ENCODE measurements at regions of chr1 and their contacts with region 1.

Region 1: DNA sequence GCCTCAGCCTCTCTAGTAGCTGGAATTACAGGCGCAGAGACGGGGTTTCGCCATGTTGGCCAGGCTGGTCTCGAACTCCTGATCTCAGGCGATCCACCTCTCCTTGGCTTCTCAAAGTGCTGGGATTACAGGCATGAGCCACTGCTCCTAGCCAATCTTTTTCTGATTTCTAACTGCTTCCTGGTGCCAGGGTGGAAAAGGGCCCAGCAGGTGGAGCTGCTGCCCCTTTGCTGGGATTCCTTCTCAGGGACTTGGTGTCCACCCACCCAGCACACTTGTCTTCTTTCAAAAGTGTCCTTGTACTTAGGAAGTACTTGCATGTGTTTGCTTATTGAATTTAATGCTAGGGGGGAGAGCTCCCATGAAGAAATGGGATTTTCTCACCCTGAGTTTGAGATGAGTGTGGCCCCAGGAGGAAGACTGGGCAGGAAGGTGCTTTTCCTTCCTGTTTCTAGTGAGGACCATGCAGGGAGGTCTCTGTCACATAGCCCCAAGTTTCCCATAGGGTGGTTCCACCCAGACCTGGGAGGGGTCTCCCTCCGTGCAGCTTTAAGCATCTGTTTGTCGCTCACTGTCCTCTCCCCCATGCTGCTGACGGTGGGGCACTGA is 14.2 kb downstream of the UTP11 start:
- DNase-seq: peak; percentile 63
- H3K4me3 ChIP-seq: no peak overlapping the region
- H3K27ac ChIP-seq: no peak overlapping the region
- H3K4me1 ChIP-seq: peaks cover 40% of the 10 kb centered on the region
- H3K27me3 ChIP-seq: no peaks in the 10 kb centered on the region
- CTCF ChIP-seq: peak; percentile 62 to 78
- POLR2A ChIP-seq: no peak

Region 2: DNA sequence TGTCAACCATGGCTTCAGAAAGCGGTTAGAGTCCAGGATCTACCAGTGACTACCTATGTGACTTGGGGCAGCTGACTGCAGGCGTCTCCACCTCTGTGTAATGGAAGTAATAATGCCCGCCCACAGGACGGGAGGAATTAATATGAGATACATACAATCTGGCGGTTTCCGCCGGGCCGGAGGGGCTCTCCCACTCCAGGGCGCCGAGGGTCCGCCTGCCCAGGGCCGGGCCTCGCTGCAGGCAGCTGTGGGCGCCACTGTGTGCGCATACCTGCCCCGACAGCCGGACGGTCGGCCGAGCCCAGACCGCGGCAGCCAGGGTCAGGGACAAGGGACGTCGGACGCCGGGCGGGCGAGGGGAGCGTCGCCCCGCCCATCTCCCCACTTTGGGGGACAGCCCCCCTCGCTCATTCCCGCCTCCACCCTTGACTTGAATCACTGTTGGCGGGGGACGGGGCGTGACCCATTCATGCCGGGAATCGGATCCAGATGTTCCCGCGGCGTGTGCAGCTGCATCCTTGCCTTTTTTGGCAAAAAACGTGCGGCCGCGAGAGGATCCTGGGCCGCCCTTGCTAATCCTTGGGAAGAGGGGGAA is 30.8 kb before region 1 on chr1:
- CTCF ChIA-PET with region 1: interaction called, 4 read pairs
- POLR2A ChIA-PET with region 1: no interaction called
- dilution Hi-C with region 1: no loop called
- intact Hi-C with region 1: loop called (anchors 1 kb)
- DNase-seq: no peak
- H3K4me3 ChIP-seq: peak overlapping the region in 1 of 3 experiments; percentile 20
- H3K27ac ChIP-seq: peak overlapping the region; percentile 46
- H3K4me1 ChIP-seq: peaks cover 44% of the 10 kb centered on the region
- H3K27me3 ChIP-seq: no peaks in the 10 kb centered on the region
- CTCF ChIP-seq: no peak
- POLR2A ChIP-seq: no peak

Region 3: GRCh38 chr1:38046884-38047602 is 20.3 kb after region 1 on chr1:
- CTCF ChIA-PET with region 1: interaction called, 12 read pairs
- POLR2A ChIA-PET with region 1: no interaction called
- dilution Hi-C with region 1: no loop called
- intact Hi-C with region 1: loop called (anchors 1 kb)
- DNase-seq: peak; percentile 71
- H3K4me3 ChIP-seq: peak overlapping the region; percentile 26 to 37 (median 28)
- H3K27ac ChIP-seq: no peak overlapping the region
- H3K4me1 ChIP-seq: peaks cover 7% of the 10 kb centered on the region
- H3K27me3 ChIP-seq: peaks cover 43 to 58% of the 10 kb centered on the region in 2 experiments
- CTCF ChIP-seq: no peak
- POLR2A ChIP-seq: no peak

Region 4: DNA sequence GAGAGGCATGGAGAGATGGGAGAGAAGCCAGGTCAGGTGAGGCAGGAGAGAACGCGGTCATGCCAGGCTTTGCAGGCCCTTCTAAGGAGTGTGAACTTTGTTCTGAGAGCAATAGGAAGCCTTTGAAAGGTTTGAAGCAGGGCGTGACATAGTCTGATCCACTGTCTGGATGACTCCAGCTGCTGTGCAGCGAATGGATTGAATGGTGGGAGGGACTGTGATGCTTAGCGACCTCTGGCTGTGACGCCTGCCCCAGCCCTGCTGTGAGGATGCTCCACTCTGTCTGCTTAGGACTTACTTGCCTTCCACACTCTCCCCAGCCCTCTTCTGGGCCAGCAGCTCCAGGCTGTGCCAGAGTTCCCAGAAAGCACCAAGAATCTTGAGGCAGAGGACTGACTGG is 61.7 kb after region 1 on chr1:
- CTCF ChIA-PET with region 1: no interaction called
- POLR2A ChIA-PET with region 1: no interaction called
- dilution Hi-C with region 1: no loop called
- intact Hi-C with region 1: no loop called
- DNase-seq: no peak
- H3K4me3 ChIP-seq: no peak overlapping the region
- H3K27ac ChIP-seq: no peak overlapping the region
- H3K4me1 ChIP-seq: no peaks in the 10 kb centered on the region
- H3K27me3 ChIP-seq: peaks cover 0 to 2% of the 10 kb centered on the region in 2 experiments
- CTCF ChIP-seq: no peak
- POLR2A ChIP-seq: no peak

Region 5: GRCh38 chr1:38500352-38500751 is 473.7 kb after region 1 on chr1:
- CTCF ChIA-PET with region 1: no interaction called
- POLR2A ChIA-PET with region 1: no interaction called
- dilution Hi-C with region 1: no loop called
- intact Hi-C with region 1: loop called (anchors 10 kb)
- DNase-seq: no peak
- H3K4me3 ChIP-seq: no peak overlapping the region
- H3K27ac ChIP-seq: no peak overlapping the region
- H3K4me1 ChIP-seq: no peaks in the 10 kb centered on the region
- H3K27me3 ChIP-seq: no peaks in the 10 kb centered on the region
- CTCF ChIP-seq: peak; percentile 12 to 20
- POLR2A ChIP-seq: no peak

Region 6: DNA sequence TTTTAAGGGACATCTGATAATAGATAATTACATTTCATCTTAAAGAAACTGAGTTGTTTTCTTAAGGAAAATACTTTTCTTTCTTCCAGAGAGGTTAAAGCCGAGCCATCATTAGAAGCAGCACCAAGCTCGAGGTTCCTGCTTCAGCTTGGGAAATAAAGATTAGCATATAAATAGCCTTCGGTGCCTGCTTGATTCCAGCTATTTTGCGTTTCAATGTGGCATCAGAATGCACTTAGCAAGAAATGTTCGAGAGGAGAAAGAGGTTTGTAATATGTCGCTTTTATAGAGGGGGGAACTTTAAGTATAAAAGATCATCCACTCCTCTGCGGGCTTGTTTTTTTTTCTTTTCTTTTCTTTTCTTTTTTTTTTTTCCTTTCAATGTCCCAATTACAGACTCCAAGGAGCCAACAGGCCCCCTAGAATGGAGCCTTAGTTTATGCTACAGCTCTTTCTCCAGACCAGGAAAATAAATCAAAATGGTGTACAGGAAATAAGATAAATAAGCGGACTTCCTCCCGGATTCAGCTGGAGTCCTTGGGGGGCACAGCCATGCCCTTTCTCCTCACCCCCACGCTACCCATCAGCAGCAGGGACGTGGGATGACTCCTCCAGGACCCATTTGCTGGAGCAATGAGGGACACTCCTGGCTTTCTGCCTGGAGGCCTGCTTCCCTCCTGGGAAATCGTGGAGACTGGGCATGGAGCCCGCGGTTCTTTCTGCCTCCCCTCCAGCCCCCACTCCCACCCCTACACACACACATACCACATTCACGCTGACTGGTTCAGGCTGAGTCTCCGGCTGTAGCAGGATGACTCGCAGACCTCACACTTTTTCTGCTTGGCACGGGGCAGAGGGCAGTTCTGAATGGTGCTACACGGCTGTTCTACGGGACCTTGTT is 701.2 kb after region 1 on chr1:
- CTCF ChIA-PET with region 1: no interaction called
- POLR2A ChIA-PET with region 1: no interaction called
- dilution Hi-C with region 1: no loop called
- intact Hi-C with region 1: loop called (anchors 5 kb)
- DNase-seq: peak; percentile 99
- H3K4me3 ChIP-seq: no peak overlapping the region
- H3K27ac ChIP-seq: peak overlapping the region; percentile 53
- H3K4me1 ChIP-seq: peaks cover 18% of the 10 kb centered on the region
- H3K27me3 ChIP-seq: peaks cover 15 to 29% of the 10 kb centered on the region in 2 experiments
- CTCF ChIP-seq: no peak
- POLR2A ChIP-seq: peak; percentile 47

Region 7: DNA sequence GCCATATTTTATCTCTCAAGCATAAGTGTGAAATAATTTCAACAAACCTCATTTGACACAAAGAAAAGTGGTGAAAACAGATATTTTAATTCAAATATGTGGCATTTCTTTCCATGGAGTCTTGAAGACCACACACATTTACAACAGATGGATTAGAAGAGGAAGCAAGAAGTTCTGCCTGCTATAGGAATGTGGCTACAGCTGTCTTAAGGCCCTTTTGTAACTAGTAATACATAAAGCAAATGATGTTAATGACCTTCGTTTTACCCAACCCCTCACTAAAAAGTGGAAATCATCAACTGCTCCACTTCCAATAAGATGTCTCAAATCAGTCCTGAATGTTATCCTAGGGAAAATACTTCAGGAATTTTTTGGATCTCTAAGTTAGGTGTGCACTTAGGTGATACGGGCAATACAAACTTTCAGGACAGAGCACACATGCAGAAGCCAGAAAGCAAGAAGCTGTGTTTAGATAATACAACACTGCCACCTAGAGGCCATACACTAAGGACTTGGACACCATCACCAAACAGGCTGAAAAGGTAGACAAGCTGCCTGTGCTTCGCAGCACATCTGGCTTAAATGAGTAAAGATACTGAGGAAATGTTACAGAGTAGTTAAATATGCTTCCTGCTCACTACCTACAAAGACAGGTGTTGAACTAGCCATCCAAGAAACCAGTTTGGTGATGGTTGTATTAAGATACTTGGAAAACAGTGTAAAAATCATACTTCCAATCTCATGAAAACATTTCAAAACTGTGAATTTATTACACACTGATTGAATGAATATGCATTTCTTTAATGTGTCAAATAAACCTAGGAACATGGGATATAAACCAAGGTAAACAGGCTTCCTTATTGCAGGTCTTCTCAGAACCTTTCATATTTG is 808.5 kb after region 1 on chr1:
- CTCF ChIA-PET with region 1: interaction called, 58 read pairs
- POLR2A ChIA-PET with region 1: no interaction called
- dilution Hi-C with region 1: no loop called
- intact Hi-C with region 1: loop called (anchors 1 kb)
- DNase-seq: peak; percentile 77
- H3K4me3 ChIP-seq: no peak overlapping the region
- H3K27ac ChIP-seq: no peak overlapping the region
- H3K4me1 ChIP-seq: peaks cover 10% of the 10 kb centered on the region
- H3K27me3 ChIP-seq: peaks cover 16 to 23% of the 10 kb centered on the region in 2 experiments
- CTCF ChIP-seq: peak; percentile 60 to 67
- POLR2A ChIP-seq: no peak

Measured in endothelial cell of umbilical vein (primary cell).